AG04450 (cell line): ENCODE measurements at regions of chr2 and their contacts with region 1.

Region 1: DNA sequence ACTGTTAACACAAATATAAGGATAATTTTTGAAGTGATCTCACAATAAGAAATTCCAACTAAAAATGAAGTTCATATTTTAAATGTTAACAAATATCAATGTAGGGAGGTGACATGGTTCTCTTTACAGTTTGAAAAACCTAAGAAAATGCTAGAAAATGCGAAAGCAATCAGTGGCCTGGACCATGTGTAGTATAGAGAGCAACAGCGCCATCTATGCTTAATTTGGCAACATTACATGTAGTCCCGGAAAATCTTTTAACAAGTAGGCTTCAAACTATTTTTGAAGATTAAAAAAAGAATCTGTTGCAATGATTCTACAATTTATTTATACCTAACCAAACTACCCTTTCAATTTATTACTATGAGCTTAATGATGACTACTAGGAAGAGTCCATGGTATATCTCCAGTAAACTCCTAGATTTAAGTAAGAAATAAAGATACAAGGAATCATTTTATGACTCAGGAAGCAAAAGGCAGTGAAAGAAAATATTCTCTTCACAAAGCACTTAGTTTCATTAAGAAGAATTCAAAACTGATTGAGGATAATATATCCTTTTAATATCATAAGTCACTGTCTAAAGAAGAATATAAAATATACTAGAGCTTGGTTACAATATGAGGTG is 33.3 kb downstream of the NDUFA10 start:
- DNase-seq: peak; percentile 29
- H3K4me3 ChIP-seq: no peak overlapping the region
- H3K27ac ChIP-seq: no peak overlapping the region
- H3K27me3 ChIP-seq: no peaks in the 10 kb centered on the region
- CTCF ChIP-seq: peak; percentile 81

Region 2: DNA sequence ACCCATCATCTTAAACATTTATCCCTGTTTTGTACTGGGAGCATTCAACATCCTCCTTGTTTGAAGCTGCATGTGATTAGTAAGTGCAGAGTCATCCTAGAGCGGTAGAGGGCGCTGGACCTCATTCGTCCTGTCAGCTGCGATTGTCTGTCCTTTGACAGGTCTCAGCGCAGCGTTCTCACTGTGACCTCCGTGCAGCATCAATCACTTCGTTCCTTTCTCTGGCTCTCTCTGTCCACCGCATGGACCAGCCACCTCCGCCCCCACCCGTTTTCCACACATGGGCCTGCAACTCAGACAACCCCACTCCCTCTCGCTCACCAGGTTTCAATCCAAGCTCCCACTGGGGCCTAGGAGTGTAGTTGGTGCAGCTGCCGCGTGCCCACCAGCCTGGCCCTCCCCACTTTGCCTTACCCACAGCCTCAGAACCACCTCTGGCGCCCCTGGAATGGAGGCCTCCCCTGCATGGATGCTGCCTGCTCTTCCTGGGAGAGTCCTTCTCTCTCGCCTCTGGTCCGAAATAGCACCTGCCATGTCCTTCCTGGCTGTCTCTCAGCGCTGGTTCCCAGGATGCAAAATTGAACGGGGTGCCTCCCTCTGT is 57.1 kb before region 1 on chr2:
- CTCF ChIA-PET with region 1: interaction called, 10 read pairs
- POLR2A ChIA-PET with region 1: no interaction called
- DNase-seq: no peak
- H3K4me3 ChIP-seq: no peak overlapping the region
- H3K27ac ChIP-seq: no peak overlapping the region
- H3K27me3 ChIP-seq: no peaks in the 10 kb centered on the region
- CTCF ChIP-seq: peak; percentile 59

Region 3: DNA sequence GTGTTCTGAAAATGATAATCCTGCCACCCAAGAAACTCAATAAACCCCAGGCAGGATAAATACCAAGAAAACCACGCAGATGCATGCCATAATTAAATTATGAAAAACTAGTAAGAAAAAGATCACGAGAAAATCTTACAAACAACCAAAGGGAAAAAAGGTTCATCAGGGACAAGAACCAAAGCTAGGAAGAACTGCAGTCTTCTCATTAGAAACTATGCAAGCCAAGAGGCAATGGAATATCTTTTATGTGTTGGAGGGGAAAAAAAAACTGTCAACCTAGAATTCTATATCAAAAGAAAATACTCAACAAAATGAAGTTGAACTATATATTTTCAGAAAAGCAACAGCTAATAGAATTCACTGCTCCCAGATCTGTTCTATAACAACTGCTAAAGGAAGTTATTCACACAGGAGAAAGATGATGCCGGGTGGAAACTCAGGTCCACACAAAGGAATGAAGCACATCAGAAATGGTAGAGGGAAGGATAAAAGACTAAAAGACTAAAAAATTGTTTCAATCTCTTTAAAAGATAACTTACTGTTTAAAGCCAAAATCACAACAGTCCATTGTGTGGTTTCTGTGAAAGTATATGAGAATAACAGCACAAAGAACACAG is 21.7 kb before region 1 on chr2:
- CTCF ChIA-PET with region 1: interaction called, 11 read pairs
- POLR2A ChIA-PET with region 1: no interaction called
- DNase-seq: no peak
- H3K4me3 ChIP-seq: no peak overlapping the region
- H3K27ac ChIP-seq: no peak overlapping the region
- H3K27me3 ChIP-seq: no peaks in the 10 kb centered on the region
- CTCF ChIP-seq: no peak

Region 4: DNA sequence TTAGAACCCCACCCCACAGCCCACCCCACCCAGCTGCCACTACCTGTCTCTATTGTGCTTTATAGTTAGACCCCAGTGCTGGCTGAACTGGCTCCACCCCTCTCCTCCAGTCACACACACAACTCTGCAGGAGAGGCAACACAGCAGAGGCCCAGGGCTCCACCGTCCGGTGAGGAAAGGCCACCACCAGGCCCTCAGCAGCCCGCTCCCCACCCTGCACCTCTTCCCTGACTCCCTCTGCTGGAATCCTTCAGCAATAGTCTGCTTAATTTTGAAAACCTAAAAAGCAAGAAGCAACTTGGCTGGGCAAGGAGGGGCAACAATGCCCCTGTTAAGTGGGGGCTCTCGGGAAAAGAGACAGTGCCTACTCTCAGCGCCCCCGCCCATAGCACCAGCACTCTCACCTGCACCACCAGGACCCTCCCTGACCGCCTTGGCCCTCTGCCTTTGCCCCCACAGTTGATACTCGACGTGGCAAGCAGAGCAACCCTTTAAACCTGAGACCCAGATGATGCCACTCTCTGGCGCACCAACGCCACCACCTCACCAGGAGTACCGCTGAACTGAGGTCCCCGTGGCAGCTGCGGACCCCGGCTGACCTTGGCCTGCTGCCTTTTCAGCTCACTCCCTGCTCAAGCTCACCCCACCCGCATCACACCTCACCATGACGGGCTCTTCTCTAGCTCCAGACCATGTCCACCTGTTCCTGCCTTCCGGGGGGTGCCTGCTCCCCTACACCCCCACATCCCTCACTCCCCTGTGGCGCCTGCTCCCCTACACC is 12.4 kb before region 1 on chr2:
- CTCF ChIA-PET with region 1: interaction called, 24 read pairs
- POLR2A ChIA-PET with region 1: no interaction called
- DNase-seq: no peak
- H3K4me3 ChIP-seq: no peak overlapping the region
- H3K27ac ChIP-seq: no peak overlapping the region
- H3K27me3 ChIP-seq: no peaks in the 10 kb centered on the region
- CTCF ChIP-seq: peak; percentile 26; the same call in 1 of the 2 replicates

Region 5: DNA sequence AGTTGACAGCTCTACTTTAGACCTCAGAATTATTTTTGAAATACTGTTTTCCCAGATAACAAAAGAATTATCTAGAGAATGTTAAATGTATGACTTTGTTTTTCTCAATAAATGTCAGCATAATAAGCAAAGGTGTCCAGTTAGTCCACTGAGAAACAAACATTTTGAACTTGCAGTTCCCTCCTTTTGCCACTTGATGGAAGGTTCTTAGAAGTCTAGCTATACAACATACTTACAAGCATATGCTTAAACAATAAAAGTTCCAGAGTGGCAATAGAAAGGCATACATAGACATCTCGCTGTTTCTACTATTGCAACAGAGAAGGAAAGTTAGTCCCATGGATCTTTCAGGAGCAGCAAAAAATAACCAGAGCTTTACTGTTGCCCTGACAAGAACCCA is 21.5 kb after region 1 on chr2:
- CTCF ChIA-PET with region 1: interaction called, 39 read pairs
- POLR2A ChIA-PET with region 1: no interaction called
- DNase-seq: no peak
- H3K4me3 ChIP-seq: no peak overlapping the region
- H3K27ac ChIP-seq: no peak overlapping the region
- H3K27me3 ChIP-seq: no peaks in the 10 kb centered on the region
- CTCF ChIP-seq: peak; percentile 50

Region 6: DNA sequence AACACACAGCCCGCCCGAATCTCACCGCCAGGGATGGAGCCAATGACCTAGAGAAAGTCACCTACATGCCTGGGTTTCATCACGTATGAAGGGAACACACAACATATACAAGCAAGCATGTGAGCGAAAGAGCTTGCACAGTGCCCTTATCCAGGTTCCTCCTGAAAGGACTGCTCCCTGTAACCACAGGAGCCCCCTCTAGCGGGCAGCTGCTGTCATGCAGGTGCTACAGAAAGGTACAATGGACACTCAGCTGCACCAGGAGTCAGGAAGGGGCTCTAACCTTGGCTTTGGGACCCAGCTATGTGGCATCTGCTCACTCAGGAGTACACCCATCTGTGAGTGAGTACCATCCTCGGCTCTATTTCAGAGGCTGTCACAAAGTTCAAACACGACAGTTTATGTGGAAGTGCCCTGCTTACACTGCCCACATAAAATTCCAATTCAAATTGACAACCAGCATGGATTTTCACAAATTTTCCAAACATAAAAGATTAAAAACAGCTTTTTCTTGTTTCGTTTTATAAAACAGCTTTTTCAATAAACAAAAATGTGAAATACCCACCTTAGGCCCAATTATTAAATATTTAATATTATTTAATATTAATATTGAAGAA is 29.8 kb after region 1 on chr2:
- CTCF ChIA-PET with region 1: interaction called, 10 read pairs
- POLR2A ChIA-PET with region 1: interaction called, 5 read pairs
- DNase-seq: peak; percentile 11
- H3K4me3 ChIP-seq: no peak overlapping the region
- H3K27ac ChIP-seq: no peak overlapping the region
- H3K27me3 ChIP-seq: no peaks in the 10 kb centered on the region
- CTCF ChIP-seq: peak; percentile 85

Region 7: GRCh38 chr2:240111251-240111650 is 119.4 kb after region 1 on chr2:
- CTCF ChIA-PET with region 1: no interaction called
- POLR2A ChIA-PET with region 1: no interaction called
- DNase-seq: no peak
- H3K4me3 ChIP-seq: no peak overlapping the region
- H3K27ac ChIP-seq: no peak overlapping the region
- H3K27me3 ChIP-seq: peaks cover 20% of the 10 kb centered on the region
- CTCF ChIP-seq: no peak

Region 8: DNA sequence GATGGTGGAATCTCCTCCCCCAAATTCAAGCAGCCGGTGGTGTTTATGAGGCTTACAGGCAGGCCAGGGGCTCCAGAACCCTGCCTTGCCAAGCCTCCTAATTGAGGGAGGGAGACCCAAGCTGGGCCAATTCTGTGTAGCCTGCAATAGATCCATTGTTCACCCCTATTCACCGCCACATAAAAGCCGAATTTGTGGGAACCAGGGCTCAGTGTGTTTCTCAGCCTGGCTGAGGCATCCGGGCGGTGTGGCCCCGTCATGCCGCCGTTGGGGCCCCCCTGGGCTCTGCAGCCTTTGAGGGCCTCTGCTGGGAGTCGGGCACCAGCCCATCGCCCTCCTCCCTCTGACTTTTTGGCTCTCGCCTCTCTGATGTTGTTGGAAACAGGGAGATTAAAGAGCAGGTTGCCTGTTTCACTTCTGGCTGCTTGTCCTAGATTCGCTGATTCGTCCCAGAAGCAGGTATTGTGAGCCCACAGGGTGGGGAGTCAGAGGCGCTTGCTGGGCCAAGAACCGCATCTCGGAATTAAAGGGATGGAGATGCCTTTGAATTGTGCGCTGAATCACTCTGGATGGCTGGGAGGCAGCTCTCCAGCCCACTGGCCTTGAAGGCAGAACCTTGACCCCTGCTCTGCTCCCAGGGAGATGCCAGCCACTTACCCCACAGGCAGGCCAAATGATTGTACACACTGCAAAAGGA is 163.4 kb after region 1 on chr2:
- CTCF ChIA-PET with region 1: no interaction called
- POLR2A ChIA-PET with region 1: no interaction called
- DNase-seq: no peak
- H3K4me3 ChIP-seq: no peak overlapping the region
- H3K27ac ChIP-seq: no peak overlapping the region
- H3K27me3 ChIP-seq: peaks cover 7% of the 10 kb centered on the region
- CTCF ChIP-seq: no peak

Region 9: DNA sequence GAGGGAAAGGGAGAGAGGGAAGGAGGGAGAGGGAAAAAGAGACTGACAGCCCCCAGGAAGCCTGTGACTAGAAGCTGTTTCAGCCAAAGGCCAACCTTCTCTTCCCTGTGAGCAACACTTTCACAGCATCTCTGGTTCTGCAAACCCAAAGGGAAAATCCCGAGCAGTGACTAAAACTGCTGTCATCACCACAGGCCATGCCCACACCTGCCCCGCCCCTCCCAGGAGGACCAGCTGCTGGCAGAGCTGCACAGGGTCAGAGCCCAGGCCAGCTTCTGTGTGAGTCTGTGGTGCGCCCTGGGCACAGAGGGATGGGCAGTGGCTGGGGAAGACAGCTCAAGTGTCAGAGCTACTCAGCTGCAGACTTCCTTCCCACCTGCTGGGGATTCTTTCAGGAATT is 213.5 kb after region 1 on chr2:
- CTCF ChIA-PET with region 1: no interaction called
- POLR2A ChIA-PET with region 1: no interaction called
- DNase-seq: no peak
- H3K4me3 ChIP-seq: no peak overlapping the region
- H3K27ac ChIP-seq: no peak overlapping the region
- H3K27me3 ChIP-seq: peaks cover 28% of the 10 kb centered on the region
- CTCF ChIP-seq: no peak